Activated T-helper 1 cell treated with anti-CD3 and anti-CD28 coated beads, Interleukin-12 subunit alpha, Interleukin-12 subunit beta, Interleukin-2, Interleukin-4 antibody, amounts not matched to agents 30 ng/mL and 10 ng/mL and 1 ng/mL, durations not matched to agents 14 hours and 24 hours and 36 hours (primary cell): ENCODE measurements at regions of chr1 and their contacts with region 1.

Region 1: DNA sequence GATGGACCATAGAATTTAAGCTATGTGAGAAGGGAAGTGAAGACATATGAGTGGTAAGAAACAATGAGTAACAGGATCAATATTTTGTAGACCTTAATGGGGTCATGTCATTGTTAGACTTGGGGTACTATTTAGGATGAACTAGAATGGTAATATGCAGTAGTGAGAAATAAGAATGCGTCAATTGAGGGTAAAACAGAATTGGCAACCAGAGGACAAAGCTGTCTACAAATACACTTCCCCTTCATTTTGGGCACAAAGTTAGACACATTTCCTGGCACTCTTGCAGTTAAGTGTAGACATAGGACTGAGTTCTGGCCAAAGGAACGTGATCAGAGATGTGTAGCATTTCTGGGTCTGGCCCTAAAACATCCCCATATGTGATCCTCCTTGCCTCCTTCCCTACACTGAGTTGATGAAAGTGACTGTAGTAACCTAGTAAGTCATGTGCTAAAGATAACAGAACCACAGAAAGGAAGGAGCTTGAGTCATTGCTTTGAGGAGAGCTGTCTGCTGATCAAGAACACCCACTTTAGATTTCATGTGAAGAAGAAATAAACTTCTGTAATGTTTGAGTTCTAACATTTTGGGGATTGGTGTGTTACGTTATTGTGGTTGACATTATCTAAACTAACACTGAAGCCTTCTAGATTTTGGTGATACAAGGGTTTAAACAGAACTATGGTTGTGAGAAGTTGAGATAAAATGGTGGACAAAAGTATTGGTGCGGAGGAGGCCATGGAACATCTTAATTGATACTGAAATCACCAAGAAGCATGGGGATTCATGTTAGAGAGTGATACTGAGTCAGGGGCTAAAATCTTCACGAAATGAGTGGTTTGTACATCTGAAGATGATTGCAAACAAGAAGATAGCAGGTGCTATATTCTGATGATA is 41.7 kb downstream of the CD55 start:
- DNase-seq: no peak
- H3K4me3 Mint-ChIP-seq: no peak overlapping the region
- H3K27ac Mint-ChIP-seq: no peak overlapping the region
- H3K4me1 Mint-ChIP-seq: no peaks in the 10 kb centered on the region
- H3K27me3 Mint-ChIP-seq: no peaks in the 10 kb centered on the region

Region 2: GRCh38 chr1:206865013-206865671 is 498.1 kb before region 1 on chr1 and contains the start of gene IL20:
- intact Hi-C with region 1: no loop called
- DNase-seq: peak; percentile 68
- H3K4me3 Mint-ChIP-seq: no peak within 1 kb of the TSS
- H3K27ac Mint-ChIP-seq: no peak within 1 kb of the TSS
- H3K4me1 Mint-ChIP-seq: peaks cover 7% of the 10 kb centered on the region
- H3K27me3 Mint-ChIP-seq: peaks cover 39% of the 10 kb centered on the region
- total RNA-seq, gene IL20: not detected in 2 replicates

Region 3: DNA sequence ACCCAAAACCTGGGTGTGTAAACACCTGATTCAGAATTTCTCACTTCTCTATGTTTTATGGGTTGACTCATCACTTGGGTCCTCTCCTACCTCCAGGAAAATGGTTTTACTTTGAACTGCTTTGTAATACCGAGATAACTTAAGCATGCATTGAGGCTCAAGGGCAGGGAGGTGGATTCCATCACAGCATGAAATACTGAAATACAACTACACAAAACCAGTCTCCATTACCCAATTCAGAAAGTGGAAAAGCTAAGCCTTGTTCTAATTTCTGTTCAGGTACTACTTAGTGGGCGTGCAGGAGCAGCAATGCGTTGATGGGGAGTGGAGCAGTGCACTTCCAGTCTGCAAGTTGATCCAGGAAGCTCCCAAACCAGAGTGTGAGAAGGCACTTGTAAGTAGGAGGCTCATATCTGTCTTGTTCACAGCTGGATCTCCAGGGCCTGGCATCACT is 265.3 kb before region 1 on chr1:
- intact Hi-C with region 1: loop called (anchors 1 kb)
- DNase-seq: peak; percentile 50
- H3K4me3 Mint-ChIP-seq: peak overlapping the region; percentile 27
- H3K27ac Mint-ChIP-seq: peak overlapping the region; percentile 69
- H3K4me1 Mint-ChIP-seq: peaks cover 40% of the 10 kb centered on the region
- H3K27me3 Mint-ChIP-seq: no peaks in the 10 kb centered on the region

Region 4: GRCh38 chr1:207282058-207282457 is 81.2 kb before region 1 on chr1:
- intact Hi-C with region 1: loop called (anchors 5 kb)
- DNase-seq: no peak
- H3K4me3 Mint-ChIP-seq: peak overlapping the region; percentile 55
- H3K27ac Mint-ChIP-seq: peak overlapping the region; percentile 57
- H3K4me1 Mint-ChIP-seq: peaks cover 69% of the 10 kb centered on the region
- H3K27me3 Mint-ChIP-seq: no peaks in the 10 kb centered on the region

Region 5: DNA sequence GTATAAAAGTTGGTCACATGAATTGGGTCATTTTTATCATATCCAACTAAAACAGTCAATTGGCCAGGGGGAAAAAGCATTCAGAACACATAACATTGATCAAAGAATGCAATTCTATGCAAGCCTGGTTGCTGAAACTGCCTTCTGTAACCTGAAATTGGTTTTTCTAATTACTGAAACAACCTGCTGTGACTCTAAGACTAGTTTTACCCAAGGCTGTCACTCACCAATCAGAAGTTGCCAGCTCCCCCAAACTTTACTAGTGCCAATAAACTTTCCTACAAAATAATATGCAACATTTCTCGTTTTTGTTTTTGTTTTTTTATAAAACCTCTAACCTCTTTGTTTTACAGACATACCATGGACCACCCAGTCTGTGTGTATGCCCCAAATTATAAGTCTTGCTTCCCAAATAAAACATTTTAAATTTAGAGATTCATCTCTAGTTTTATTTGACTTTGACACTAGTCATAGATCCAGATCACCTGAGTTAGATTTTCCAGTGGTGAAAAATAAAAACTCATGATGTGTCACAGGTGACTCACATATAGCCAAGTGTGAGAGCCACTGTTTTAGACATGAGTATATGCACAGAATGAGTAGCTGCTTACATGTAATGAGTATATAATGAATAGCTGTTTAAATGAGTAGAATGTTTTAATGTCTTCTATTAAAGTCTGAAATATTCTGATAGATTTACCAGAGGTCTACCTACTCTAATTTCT is 26.7 kb after region 1 on chr1:
- intact Hi-C with region 1: loop called (anchors 1 kb)
- DNase-seq: no peak
- H3K4me3 Mint-ChIP-seq: no peak overlapping the region
- H3K27ac Mint-ChIP-seq: peak overlapping the region; percentile 81
- H3K4me1 Mint-ChIP-seq: peaks cover 7% of the 10 kb centered on the region
- H3K27me3 Mint-ChIP-seq: no peaks in the 10 kb centered on the region

Region 6: DNA sequence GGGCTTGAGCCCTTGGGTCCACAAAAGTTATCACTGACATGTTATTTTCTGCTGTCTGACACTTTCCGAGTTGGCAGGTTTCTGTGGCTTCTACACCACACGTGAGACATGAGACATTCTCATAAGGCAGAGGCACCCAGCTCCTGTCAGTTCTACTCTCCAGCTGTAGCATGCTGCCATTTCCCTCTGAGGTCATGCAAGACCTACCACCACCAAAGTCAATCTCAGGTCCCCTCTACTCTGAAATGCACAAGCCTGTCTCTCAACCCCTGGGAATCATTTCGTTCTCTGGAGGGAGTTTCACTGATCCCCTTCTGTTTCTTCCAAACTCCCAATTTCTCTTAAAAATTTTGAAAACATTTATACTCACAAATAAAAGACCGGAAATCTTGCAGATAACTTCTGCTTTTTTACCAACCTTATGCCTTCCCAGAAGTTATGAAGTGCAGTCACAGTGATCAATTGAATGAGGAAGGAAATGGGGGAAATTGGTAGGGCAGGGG is 51.4 kb after region 1 on chr1:
- intact Hi-C with region 1: loop called (anchors 1 kb)
- DNase-seq: no peak
- H3K4me3 Mint-ChIP-seq: no peak overlapping the region
- H3K27ac Mint-ChIP-seq: peak overlapping the region; percentile 35
- H3K4me1 Mint-ChIP-seq: peaks cover 33% of the 10 kb centered on the region
- H3K27me3 Mint-ChIP-seq: peaks cover 4% of the 10 kb centered on the region